Lower lobe of right lung (tissue), 2 donors: ENCODE measurements at regions of chr1 and their contacts with region 1.

Region 1: DNA sequence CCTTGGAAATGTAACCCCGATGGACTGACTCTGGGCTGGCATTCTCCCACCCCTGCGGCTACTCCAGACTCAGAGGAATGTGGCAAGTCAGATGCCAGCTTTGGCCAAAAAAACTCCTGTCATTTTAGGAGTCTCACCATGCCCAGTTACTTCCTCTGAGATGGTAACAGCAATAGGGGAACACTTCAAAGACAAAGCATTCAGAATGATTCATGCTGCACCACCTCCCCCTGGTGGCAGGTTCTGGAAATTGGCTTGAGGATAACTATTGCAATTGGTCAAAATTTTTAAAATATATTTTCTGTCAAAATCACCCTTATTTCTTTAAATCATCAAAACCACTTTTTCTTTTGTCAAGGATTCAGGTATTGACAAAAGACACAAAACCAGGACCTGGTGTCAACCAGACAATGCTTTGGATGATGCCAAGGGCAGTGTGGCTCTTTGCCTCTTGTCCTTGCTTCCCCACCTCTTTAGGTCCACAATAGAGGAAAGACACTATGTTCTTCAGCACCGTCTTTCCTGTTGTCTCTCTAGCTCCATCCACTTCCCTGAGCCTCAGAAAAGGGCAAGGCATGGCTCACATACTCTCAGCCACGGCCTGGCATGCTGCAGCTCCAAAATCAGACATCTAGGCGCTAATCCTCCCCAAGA is 9.9 kb upstream of the CDCA8 start:
- DNase-seq: peak; percentile 66
- ATAC-seq: peak; percentile 78 to 87
- H3K4me3 ChIP-seq: no peak overlapping the region
- H3K27ac ChIP-seq: no peak overlapping the region
- H3K4me1 ChIP-seq: no peaks in the 10 kb centered on the region
- H3K27me3 ChIP-seq: no peaks in the 10 kb centered on the region
- CTCF ChIP-seq: peak; percentile 81

Region 2: DNA sequence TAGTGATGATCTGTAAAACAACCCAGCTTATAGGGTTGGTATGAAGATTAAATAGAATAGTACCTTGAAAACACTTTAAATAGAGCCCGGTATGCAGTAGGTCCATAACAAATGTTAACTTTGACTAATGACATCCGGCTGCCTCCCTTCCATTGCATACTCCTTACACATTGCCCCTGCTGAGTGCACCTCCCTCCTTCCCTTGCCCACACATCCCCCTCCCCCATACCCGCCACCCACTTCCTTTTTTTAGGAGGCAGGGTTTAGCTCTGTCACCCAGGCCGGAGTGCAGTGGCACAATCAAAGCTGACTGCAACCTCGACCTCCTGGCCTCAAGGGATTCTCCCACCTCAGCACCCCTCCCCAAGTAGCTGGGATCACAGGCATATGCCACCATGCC is 232.5 kb before region 1 on chr1:
- intact Hi-C with region 1: loop called (anchors 10 kb)
- DNase-seq: peak; percentile 66
- ATAC-seq: peak; percentile 33 to 55
- H3K4me3 ChIP-seq: no peak overlapping the region
- H3K27ac ChIP-seq: no peak overlapping the region
- H3K4me1 ChIP-seq: peaks cover 5% of the 10 kb centered on the region
- H3K27me3 ChIP-seq: peaks cover 13% of the 10 kb centered on the region
- CTCF ChIP-seq: no peak

Region 3: DNA sequence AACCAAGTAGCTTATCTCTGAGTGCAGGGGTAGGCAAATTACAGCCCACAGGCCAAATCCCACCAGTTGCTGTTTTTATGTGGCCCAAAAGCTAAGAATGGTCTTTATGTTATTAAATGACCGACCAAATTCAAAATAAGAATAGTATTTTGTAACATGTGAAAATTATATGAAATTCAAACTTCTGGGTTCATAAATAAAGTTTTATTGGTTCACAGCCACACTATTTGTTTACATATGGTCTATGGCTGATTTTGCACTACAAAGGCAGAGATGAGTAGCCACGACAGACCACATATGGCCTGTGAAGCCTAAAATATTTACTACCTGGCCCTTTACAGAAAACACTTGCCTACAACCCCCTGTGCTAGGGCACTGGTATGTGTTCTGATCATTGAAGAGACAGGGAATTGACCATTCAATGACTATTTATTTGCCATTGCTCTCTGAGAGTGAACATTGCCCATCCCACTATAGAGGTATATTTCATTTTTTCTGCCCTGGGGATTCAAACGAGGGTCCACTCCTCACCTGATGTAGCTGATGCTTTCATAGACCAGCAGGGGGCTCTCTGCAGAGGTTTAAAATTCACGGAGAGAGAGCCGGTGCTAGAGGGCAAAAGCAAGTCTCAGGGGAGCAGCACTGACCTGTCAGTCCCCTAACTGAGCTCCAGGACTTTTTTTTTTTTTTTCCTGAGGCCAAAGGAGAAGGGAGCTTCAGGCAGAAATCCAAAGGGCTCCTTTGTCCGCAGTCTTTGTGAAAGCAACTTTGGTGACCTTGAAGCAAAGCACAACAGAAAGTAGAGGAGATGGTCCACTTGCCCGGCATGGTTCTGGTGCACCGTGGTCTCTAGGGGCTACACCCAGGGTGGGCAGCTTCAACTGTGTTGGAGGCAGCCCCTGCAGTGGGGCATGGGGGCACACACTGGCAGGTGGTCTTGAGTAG is 79.4 kb before region 1 on chr1:
- intact Hi-C with region 1: loop called (anchors 5 kb)
- DNase-seq: no peak
- ATAC-seq: peak; percentile 56 to 58
- H3K4me3 ChIP-seq: no peak overlapping the region
- H3K27ac ChIP-seq: no peak overlapping the region
- H3K4me1 ChIP-seq: peaks cover 18% of the 10 kb centered on the region
- H3K27me3 ChIP-seq: no peaks in the 10 kb centered on the region
- CTCF ChIP-seq: peak; percentile 66